SK-N-SH (cell line): ENCODE measurements at regions of chr16 and their contacts with region 1.

Region 1: DNA sequence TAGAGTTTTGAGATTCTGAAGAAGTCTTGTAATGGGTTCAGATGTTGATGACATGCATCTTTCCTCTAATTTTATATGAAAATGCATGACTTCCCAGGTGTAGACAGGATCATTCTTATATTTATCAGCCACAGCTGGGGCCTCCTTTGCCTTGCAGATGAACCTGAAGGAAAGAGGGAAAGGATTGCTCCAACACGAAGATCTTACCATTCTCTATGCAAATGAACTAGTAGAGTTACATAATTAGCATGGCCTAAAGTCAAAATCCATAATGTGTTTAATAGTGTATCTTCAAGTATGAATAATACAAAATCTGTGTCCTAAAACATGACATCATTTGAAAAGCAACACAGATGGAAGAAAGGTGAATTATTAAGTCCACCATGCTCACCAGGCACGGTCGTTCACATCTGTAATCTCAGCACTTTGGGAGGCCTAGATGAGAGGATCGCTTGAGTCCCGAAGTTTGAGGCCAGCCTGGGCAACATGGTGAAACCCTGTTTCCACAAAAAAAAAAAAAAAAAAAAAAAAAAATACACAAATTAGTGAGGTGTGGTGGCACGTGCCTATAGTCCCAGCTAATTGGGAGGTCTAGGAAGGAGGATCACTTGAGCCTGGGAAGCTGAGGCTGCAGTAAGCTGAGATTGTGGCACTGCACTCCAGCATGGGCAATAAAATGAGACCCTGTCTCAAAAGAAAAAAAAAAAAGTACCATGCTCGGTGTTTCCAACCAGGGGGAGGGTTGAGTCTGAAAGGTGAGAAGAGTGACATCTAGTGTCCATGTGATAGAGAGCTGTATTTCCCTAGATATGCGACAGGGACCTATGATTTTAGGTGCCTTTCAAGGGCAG is 6.3 kb downstream of the VWA3A start:
- DNase-seq: peak; percentile 71
- H3K4me3 ChIP-seq: no peak overlapping the region; a peak in 1 of 4 replicates
- H3K27ac ChIP-seq: no peak overlapping the region
- H3K4me1 ChIP-seq: no peaks in the 10 kb centered on the region; a peak in 1 of 4 replicates
- H3K27me3 ChIP-seq: no peaks in the 10 kb centered on the region; the same call in 1 of the 2 replicates
- CTCF ChIP-seq: peak; percentile 66
- EP300 ChIP-seq: no peak
- RAD21 ChIP-seq: peak; percentile 75

Region 2: GRCh38 chr16:21989133-21989532 is 109.5 kb before region 1 on chr16:
- CTCF ChIA-PET with region 1: interaction called, 11 read pairs
- POLR2A ChIA-PET with region 1: interaction called, 4 read pairs
- DNase-seq: no peak
- H3K4me3 ChIP-seq: no peak overlapping the region
- H3K27ac ChIP-seq: no peak overlapping the region
- H3K4me1 ChIP-seq: peaks cover 0 to 4% of the 10 kb centered on the region in 2 experiments; a peak in 1 of 4 replicates
- H3K27me3 ChIP-seq: no peaks in the 10 kb centered on the region
- CTCF ChIP-seq: no peak
- EP300 ChIP-seq: no peak
- RAD21 ChIP-seq: no peak

Region 3: GRCh38 chr16:22001591-22001990 is 97.0 kb before region 1 on chr16:
- CTCF ChIA-PET with region 1: interaction called, 75 read pairs
- POLR2A ChIA-PET with region 1: no interaction called
- DNase-seq: no peak
- H3K4me3 ChIP-seq: no peak overlapping the region
- H3K27ac ChIP-seq: no peak overlapping the region
- H3K4me1 ChIP-seq: peaks cover 0 to 4% of the 10 kb centered on the region in 2 experiments; a peak in 1 of 4 replicates
- H3K27me3 ChIP-seq: no peaks in the 10 kb centered on the region
- CTCF ChIP-seq: no peak
- EP300 ChIP-seq: no peak
- RAD21 ChIP-seq: no peak

Region 4: DNA sequence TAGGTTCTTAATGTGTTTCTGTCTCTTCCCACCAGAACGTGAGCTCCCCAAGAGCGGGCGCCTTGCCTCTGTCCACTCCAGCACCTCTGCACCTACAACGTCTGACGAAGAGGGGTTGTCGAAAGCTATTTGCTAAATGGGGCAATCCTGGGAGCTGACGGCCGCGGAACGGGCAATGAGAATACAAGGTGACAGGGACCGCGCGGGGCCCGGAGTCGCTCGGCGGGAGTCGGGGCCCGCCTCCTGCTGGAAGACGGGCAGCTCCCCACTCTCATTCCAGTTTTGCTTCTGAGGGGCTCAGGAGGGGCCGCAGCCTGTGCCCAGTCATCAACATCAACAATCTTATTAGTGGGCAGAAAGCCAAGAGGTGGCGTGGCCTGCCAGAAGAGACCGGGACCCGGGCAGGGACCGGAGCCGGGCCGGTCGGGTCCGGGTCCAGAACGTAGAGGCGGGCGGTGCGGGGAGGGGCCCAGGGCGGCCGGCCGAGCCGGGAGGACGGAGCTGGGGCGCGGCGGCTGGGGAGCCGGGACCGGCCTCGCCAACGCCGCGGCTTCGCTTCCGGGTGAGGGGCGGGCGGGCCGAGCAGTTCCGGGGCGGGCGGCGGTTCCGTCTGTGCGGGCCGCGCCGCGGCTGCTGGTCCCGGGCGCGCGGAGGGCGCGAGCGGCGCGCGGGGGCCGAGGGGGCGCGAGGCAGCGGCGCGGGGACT is 91.0 kb before region 1 on chr16 and contains the start of gene MOSMO:
- CTCF ChIA-PET with region 1: interaction called, 75 read pairs
- POLR2A ChIA-PET with region 1: interaction called, 3 read pairs
- DNase-seq: peak; percentile 94
- H3K4me3 ChIP-seq: peak within 1 kb of the TSS; percentile 96 to 98
- H3K27ac ChIP-seq: peak within 1 kb of the TSS; percentile 62 to 90; a peak in 3 of 4 replicates
- H3K4me1 ChIP-seq: peaks cover 0 to 13% of the 10 kb centered on the region in 2 experiments; a peak in 1 of 4 replicates
- H3K27me3 ChIP-seq: no peaks in the 10 kb centered on the region
- CTCF ChIP-seq: no peak
- EP300 ChIP-seq: no peak
- RAD21 ChIP-seq: no peak
- polyA plus RNA-seq, gene MOSMO: 8.0 and 10.0 TPM in 2 replicates

Region 5: GRCh38 chr16:22055878-22056277 is 42.8 kb before region 1 on chr16:
- CTCF ChIA-PET with region 1: no interaction called
- POLR2A ChIA-PET with region 1: no interaction called
- DNase-seq: no peak
- H3K4me3 ChIP-seq: no peak overlapping the region
- H3K27ac ChIP-seq: no peak overlapping the region
- H3K4me1 ChIP-seq: no peaks in the 10 kb centered on the region
- H3K27me3 ChIP-seq: no peaks in the 10 kb centered on the region
- CTCF ChIP-seq: no peak
- EP300 ChIP-seq: no peak
- RAD21 ChIP-seq: no peak

Region 6: GRCh38 chr16:22070361-22071330 is 28.0 kb before region 1 on chr16:
- CTCF ChIA-PET with region 1: interaction called, 67 read pairs
- POLR2A ChIA-PET with region 1: no interaction called
- DNase-seq: no peak
- H3K4me3 ChIP-seq: no peak overlapping the region
- H3K27ac ChIP-seq: no peak overlapping the region
- H3K4me1 ChIP-seq: peaks cover 0 to 9% of the 10 kb centered on the region in 2 experiments; a peak in 1 of 4 replicates
- H3K27me3 ChIP-seq: no peaks in the 10 kb centered on the region
- CTCF ChIP-seq: no peak
- EP300 ChIP-seq: no peak
- RAD21 ChIP-seq: no peak

Region 7: GRCh38 chr16:22109258-22109898 is 10.7 kb after region 1 on chr16:
- CTCF ChIA-PET with region 1: interaction called, 21 read pairs
- POLR2A ChIA-PET with region 1: no interaction called
- DNase-seq: no peak
- H3K4me3 ChIP-seq: no peak overlapping the region
- H3K27ac ChIP-seq: no peak overlapping the region
- H3K4me1 ChIP-seq: no peaks in the 10 kb centered on the region
- H3K27me3 ChIP-seq: peaks cover 9% of the 10 kb centered on the region
- CTCF ChIP-seq: no peak
- EP300 ChIP-seq: no peak
- RAD21 ChIP-seq: no peak

Region 8: DNA sequence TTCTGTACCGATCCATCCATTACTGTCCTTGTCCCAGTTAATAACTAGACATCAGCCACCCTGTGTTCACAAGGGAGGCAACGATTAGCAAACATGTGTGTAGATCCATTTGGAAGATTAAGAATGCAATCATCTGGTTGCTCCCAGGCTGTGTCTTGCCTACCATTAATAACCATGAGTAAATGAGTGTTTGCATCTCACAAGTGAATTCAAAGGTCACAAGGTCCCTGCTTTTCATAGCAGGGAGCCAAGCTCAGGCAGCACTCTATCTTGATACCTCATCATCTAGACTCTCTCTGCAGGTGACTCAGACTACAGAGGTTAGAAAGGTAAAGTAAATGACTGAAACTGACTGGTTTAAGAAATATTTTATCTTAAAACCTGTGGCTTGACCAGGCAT is 19.0 kb after region 1 on chr16:
- CTCF ChIA-PET with region 1: interaction called, 12 read pairs
- POLR2A ChIA-PET with region 1: no interaction called
- DNase-seq: peak; percentile 31
- H3K4me3 ChIP-seq: no peak overlapping the region
- H3K27ac ChIP-seq: peak overlapping the region in 1 of 2 experiments; percentile 2; a peak in 1 of 4 replicates
- H3K4me1 ChIP-seq: peaks cover 0 to 3% of the 10 kb centered on the region in 2 experiments; a peak in 1 of 4 replicates
- H3K27me3 ChIP-seq: no peaks in the 10 kb centered on the region
- CTCF ChIP-seq: no peak
- EP300 ChIP-seq: no peak
- RAD21 ChIP-seq: no peak

Region 9: DNA sequence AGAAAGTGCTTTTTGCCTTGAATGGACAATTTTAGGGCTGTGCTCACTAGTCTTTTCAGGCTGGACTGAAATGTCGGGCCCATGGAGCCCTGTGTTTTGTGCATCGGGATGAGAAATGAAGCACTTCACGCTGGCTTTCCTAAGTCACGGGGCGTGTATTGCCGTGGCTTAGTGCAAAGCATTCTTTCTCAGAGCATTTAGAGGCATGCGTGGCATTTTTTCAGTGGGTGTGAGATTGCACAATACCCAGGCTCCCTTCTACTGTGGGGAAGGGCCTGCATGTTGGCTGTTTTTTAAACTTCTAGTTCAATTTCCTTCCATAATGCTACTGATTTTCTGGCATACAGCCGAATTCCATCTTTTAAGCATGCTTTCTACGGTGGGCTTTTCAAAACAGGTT is 186.0 kb after region 1 on chr16:
- CTCF ChIA-PET with region 1: no interaction called
- POLR2A ChIA-PET with region 1: no interaction called
- DNase-seq: no peak
- H3K4me3 ChIP-seq: no peak overlapping the region
- H3K27ac ChIP-seq: no peak overlapping the region
- H3K4me1 ChIP-seq: peaks cover 0 to 5% of the 10 kb centered on the region in 2 experiments; a peak in 1 of 4 replicates
- H3K27me3 ChIP-seq: no peaks in the 10 kb centered on the region
- CTCF ChIP-seq: no peak
- EP300 ChIP-seq: no peak
- RAD21 ChIP-seq: no peak